K562 (cell line): ENCODE measurements at regions of chr7 and their contacts with region 1.

Region 1: GRCh38 chr7:54743580-54743979 is 15.4 kb downstream of the SEC61G start:
- DNase-seq: peak in 2 of 4 experiments; percentile 38 to 58
- ATAC-seq: peak; percentile 88
- H3K4me3 ChIP-seq: no peak overlapping the region
- H3K27ac ChIP-seq: no peak overlapping the region
- H3K4me1 ChIP-seq: peaks cover 0 to 6% of the 10 kb centered on the region in 2 experiments; a peak in 1 of 5 replicates
- H3K27me3 ChIP-seq: no peaks in the 10 kb centered on the region
- CTCF ChIP-seq: no peak
- EP300 ChIP-seq: peak; percentile 28; the same call in 1 of the 2 replicates
- POLR2A ChIP-seq: no peak
- RAD21 ChIP-seq: no peak

Region 2: DNA sequence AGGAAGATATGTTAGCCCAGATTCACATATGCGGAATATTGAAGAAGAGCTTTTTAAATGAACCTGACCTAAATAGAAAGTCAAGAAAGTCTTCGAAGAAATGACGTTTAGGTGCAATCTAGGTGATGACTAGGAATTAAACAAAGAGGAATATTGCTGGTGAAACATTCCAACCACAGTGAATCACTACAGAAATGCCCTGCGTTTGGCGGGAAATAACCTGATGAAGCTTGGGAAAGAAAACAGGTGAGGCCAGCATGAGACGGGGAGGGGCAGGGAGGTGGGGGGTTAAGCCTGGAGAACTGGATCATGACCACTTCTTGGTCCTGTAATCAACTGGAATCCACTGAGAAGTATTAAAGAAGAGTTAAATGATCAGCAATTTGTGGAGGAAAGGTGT is 500.8 kb before region 1 on chr7:
- CTCF ChIA-PET with region 1: no interaction called
- POLR2A ChIA-PET with region 1: no interaction called
- in situ Hi-C with region 1: no loop called
- intact Hi-C with region 1: no loop called
- DNase-seq: no peak
- ATAC-seq: no peak
- H3K4me3 ChIP-seq: no peak overlapping the region
- H3K27ac ChIP-seq: no peak overlapping the region
- H3K4me1 ChIP-seq: no peaks in the 10 kb centered on the region
- H3K27me3 ChIP-seq: no peaks in the 10 kb centered on the region
- CTCF ChIP-seq: no peak
- EP300 ChIP-seq: no peak
- POLR2A ChIP-seq: no peak
- RAD21 ChIP-seq: no peak

Region 3: DNA sequence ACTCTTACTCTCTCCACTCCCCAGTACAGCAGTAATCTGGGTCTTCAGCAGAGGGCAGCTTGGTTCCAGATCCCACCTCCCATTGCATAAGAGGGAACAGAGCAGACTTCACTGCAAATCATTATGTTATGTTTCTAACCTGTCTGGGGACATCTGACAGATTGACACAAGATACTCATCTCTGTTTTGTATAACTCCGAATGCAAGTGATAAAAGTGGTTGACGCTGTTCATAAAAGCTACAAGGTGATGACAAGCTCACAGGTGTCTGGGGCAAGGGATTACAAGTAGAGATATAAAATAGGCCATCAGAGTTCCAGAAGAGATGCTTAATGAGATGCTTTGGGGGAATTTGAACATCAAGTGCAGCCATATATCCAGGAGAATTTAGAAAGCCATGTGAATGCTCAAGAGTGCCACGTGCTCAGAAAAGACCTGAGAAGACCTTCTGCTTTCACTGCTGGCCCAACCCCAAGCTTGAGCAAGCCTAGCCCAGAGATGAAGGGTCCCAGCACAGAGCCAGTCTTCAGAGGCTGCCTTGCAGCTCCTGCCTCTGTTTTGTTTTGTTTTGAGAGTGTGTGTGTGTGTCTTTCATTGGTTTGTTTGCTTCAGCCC is 120.8 kb before region 1 on chr7:
- CTCF ChIA-PET with region 1: no interaction called
- POLR2A ChIA-PET with region 1: no interaction called
- in situ Hi-C with region 1: no loop called
- intact Hi-C with region 1: no loop called
- DNase-seq: no peak
- ATAC-seq: no peak
- H3K4me3 ChIP-seq: no peak overlapping the region
- H3K27ac ChIP-seq: no peak overlapping the region
- H3K4me1 ChIP-seq: no peaks in the 10 kb centered on the region
- H3K27me3 ChIP-seq: no peaks in the 10 kb centered on the region
- CTCF ChIP-seq: no peak
- EP300 ChIP-seq: no peak
- POLR2A ChIP-seq: no peak
- RAD21 ChIP-seq: no peak

Region 4: GRCh38 chr7:54758702-54759592 is 15.4 kb after region 1 on chr7 and contains the start of gene SEC61G:
- CTCF ChIA-PET with region 1: no interaction called
- POLR2A ChIA-PET with region 1: interaction called, 15 read pairs
- in situ Hi-C with region 1: no loop called
- intact Hi-C with region 1: no loop called
- DNase-seq: peak; percentile 89 to 97 (median 92)
- ATAC-seq: peak; percentile 94
- H3K4me3 ChIP-seq: peak within 1 kb of the TSS; percentile 91
- H3K27ac ChIP-seq: peak within 1 kb of the TSS; percentile 81
- H3K4me1 ChIP-seq: peaks cover 3 to 9% of the 10 kb centered on the region in 2 experiments; a peak in 4 of 5 replicates
- H3K27me3 ChIP-seq: peaks cover 0 to 2% of the 10 kb centered on the region in 2 experiments; a peak in 1 of 5 replicates
- CTCF ChIP-seq: no peak
- EP300 ChIP-seq: no peak
- POLR2A ChIP-seq: peak; percentile 97
- RAD21 ChIP-seq: no peak
- polyA plus RNA-seq, gene SEC61G: 442 to 565 TPM

Region 5: GRCh38 chr7:55546829-55547228 is 803.2 kb after region 1 on chr7:
- CTCF ChIA-PET with region 1: no interaction called
- POLR2A ChIA-PET with region 1: no interaction called
- in situ Hi-C with region 1: no loop called
- intact Hi-C with region 1: no loop called
- DNase-seq: no peak
- ATAC-seq: peak; percentile 22
- H3K4me3 ChIP-seq: no peak overlapping the region
- H3K27ac ChIP-seq: no peak overlapping the region
- H3K4me1 ChIP-seq: no peaks in the 10 kb centered on the region; a peak in 1 of 5 replicates
- H3K27me3 ChIP-seq: no peaks in the 10 kb centered on the region
- CTCF ChIP-seq: no peak
- EP300 ChIP-seq: no peak
- POLR2A ChIP-seq: no peak
- RAD21 ChIP-seq: no peak